Natural killer cell (primary cell): ENCODE measurements at regions of chr15 and their contacts with region 1.

Region 1: DNA sequence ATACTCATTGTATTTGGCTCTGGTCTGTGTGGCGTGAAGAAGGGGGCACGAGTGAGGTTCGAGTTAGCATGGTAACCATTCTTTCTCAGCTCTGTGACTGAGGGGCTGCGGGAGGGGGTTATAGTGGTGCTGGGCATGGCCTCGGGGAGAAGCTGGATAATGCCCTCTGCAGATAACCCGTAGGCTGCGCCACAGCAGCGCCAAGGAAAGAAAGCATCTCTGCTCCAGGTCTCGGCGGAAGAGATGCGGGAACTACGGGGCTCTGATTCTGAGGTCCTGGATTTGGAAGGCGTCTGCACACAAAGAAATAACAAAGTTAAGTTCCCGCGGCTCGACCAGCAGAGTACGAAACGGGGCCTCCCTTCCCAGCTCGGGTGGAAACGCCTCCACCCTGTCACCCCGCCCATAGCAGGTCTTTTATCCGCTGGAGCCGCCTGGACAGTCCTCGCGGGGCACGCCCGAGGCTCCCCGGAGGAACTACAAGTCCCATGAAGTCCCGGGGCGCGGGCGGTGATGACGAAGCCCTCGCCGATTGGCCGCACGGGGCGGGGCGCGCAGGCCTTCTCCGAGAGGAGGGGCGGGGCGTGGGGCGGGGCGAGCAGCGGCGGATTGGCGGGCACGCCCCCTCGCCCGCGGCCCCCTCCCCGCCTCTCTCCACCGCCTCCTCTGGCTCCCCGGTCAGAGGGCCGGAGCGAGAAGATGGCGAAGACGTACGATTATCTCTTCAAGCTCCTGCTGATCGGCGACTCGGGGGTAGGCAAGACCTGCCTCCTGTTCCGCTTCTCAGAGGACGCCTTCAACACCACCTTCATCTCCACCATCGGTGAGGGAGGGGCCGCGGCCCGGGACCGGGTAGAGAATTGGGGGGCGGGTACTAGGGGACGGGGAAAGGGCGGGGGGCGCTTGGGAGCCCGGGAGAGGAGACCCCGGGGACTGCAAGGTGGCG is at the start of gene RAB8B:
- DNase-seq: peak; percentile 95 to 96
- ATAC-seq: peak; percentile 72 to 91 (median 80)
- H3K4me3 ChIP-seq: peak within 1 kb of the TSS; percentile 89
- H3K4me3 Mint-ChIP-seq: peak within 1 kb of the TSS; percentile 97
- H3K27ac ChIP-seq: peak within 1 kb of the TSS; percentile 94
- H3K27ac Mint-ChIP-seq: peak within 1 kb of the TSS; percentile 93 to 99
- H3K4me1 ChIP-seq: peaks cover 25% of the 10 kb centered on the region
- H3K4me1 Mint-ChIP-seq: peaks cover 46 to 52% of the 10 kb centered on the region in 2 donors
- H3K27me3 ChIP-seq: no peaks in the 10 kb centered on the region
- H3K27me3 Mint-ChIP-seq: no peaks in the 10 kb centered on the region
- CTCF ChIP-seq: no peak
- total RNA-seq, gene RAB8B: 128 to 155 (median 137) TPM

Region 2: GRCh38 chr15:62752657-62753517 is 436.3 kb before region 1 on chr15:
- intact Hi-C with region 1: no loop called
- DNase-seq: no peak
- ATAC-seq: no peak
- H3K4me3 ChIP-seq: no peak overlapping the region
- H3K4me3 Mint-ChIP-seq: no peak overlapping the region
- H3K27ac ChIP-seq: no peak overlapping the region
- H3K27ac Mint-ChIP-seq: no peak overlapping the region
- H3K4me1 ChIP-seq: no peaks in the 10 kb centered on the region
- H3K4me1 Mint-ChIP-seq: no peaks in the 10 kb centered on the region
- H3K27me3 ChIP-seq: no peaks in the 10 kb centered on the region
- H3K27me3 Mint-ChIP-seq: peaks cover 3 to 6% of the 10 kb centered on the region in 2 donors
- CTCF ChIP-seq: no peak

Region 3: GRCh38 chr15:63157118-63157843 is 31.9 kb before region 1 on chr15 and contains the start of gene RPS27L:
- intact Hi-C with region 1: loop called (anchors 1 kb)
- DNase-seq: peak; percentile 80 to 90
- ATAC-seq: peak; percentile 93 to 97 (median 94)
- H3K4me3 ChIP-seq: peak within 1 kb of the TSS; percentile 69
- H3K4me3 Mint-ChIP-seq: peak within 1 kb of the TSS; percentile 99
- H3K27ac ChIP-seq: peak within 1 kb of the TSS; percentile 80
- H3K27ac Mint-ChIP-seq: peak within 1 kb of the TSS; percentile 95 to 97
- H3K4me1 ChIP-seq: peaks cover 6% of the 10 kb centered on the region
- H3K4me1 Mint-ChIP-seq: peaks cover 14 to 15% of the 10 kb centered on the region in 2 donors
- H3K27me3 ChIP-seq: no peaks in the 10 kb centered on the region
- H3K27me3 Mint-ChIP-seq: no peaks in the 10 kb centered on the region
- CTCF ChIP-seq: no peak
- total RNA-seq, gene RPS27L: 50.4 to 63.3 (median 52.2) TPM

Region 4: DNA sequence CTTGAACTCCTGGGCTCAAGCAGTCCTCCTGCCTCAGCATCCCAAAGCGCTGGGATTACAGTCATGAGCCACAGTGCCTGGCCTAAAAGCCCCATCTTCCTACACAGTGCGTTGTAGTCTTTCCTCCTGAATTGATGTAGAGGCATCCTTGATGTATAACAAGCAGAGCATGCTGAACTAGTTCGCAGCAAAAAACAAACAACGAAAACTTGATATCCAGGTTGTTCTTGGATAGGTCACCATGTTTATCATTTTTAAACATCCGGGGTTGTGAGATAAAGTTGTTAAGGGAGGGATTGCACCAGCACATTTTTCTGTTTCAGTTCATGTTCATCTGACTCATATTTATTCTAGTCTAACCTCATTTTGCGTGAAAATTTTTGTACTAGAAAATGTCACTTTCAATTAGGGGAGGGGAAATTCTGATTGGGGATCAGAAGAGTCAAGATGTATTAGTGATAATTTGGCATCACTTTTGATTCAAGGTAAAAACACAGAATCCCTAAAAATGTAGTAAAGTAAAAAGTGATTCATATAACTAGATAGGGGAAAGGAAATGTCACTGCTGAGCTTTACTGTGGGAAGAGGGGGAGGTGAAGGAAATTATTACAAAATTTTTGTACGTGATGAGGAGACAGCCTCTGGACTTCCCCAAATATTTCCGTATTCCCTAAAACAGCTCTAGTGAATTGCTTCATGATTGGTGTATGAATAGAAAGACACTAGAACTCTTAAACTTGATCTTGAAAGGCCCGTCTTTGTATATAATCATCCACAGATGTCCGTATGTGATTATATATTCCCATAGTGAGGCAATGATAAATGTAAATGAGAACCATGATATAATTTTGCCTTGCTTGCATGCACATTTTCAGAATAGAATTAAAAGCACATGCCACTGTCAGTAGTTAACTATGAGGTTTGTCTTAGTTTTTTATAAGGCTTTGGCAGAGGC is 23.1 kb after region 1 on chr15:
- intact Hi-C with region 1: loop called (anchors 2 kb)
- DNase-seq: peak in 1 of 2 donors; percentile 41
- ATAC-seq: peak; percentile 17 to 66 (median 41)
- H3K4me3 ChIP-seq: no peak overlapping the region
- H3K4me3 Mint-ChIP-seq: peak overlapping the region; percentile 64
- H3K27ac ChIP-seq: peak overlapping the region; percentile 65
- H3K27ac Mint-ChIP-seq: peak overlapping the region; percentile 86 to 93
- H3K4me1 ChIP-seq: peaks cover 39% of the 10 kb centered on the region
- H3K4me1 Mint-ChIP-seq: peaks cover 76 to 82% of the 10 kb centered on the region in 2 donors
- H3K27me3 ChIP-seq: no peaks in the 10 kb centered on the region
- H3K27me3 Mint-ChIP-seq: no peaks in the 10 kb centered on the region
- CTCF ChIP-seq: no peak

Region 5: DNA sequence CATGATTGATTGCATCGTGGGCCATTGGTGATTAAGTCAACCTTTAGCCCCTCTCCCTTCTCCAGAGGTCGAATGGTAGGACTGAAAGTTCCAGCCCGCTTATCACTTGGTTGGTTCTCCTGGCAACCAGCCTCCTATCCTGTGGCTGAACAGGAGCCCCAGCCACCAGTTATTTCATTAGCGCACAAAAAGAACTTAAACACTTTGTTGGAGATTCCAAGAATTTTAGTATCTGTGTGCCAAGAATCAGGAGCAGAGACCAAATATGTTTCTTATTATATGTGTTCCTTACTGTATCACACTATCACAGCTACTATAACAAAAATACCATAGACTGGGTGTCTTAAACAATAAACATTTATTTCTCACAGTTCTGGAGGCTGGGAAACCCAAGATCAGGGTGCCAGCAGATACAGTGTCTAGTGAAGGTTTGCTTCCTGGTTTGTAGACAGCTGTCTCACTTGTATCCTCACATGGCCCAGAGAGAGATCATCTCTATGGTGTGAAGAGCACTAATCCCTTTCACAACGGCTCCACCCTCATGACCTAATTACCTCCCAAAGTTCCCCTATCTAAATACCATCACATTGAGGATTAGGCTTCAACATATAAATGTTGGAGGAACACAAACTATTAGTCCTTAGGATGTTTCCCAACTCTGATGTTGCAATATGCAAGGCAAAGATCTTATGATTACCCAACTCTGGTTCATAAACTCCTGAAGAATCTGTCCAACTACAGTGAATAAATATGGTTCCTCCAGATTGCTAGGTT is 57.7 kb after region 1 on chr15:
- intact Hi-C with region 1: loop called (anchors 1 kb)
- DNase-seq: peak in 1 of 2 donors; percentile 38
- ATAC-seq: peak; percentile 81 to 90 (median 82)
- H3K4me3 ChIP-seq: no peak overlapping the region
- H3K4me3 Mint-ChIP-seq: peak overlapping the region; percentile 52
- H3K27ac ChIP-seq: peak overlapping the region; percentile 14
- H3K27ac Mint-ChIP-seq: peak overlapping the region; percentile 87 to 92
- H3K4me1 ChIP-seq: peaks cover 19% of the 10 kb centered on the region
- H3K4me1 Mint-ChIP-seq: peaks cover 83% of the 10 kb centered on the region in 2 donors
- H3K27me3 ChIP-seq: no peaks in the 10 kb centered on the region
- H3K27me3 Mint-ChIP-seq: no peaks in the 10 kb centered on the region
- CTCF ChIP-seq: no peak

Region 6: DNA sequence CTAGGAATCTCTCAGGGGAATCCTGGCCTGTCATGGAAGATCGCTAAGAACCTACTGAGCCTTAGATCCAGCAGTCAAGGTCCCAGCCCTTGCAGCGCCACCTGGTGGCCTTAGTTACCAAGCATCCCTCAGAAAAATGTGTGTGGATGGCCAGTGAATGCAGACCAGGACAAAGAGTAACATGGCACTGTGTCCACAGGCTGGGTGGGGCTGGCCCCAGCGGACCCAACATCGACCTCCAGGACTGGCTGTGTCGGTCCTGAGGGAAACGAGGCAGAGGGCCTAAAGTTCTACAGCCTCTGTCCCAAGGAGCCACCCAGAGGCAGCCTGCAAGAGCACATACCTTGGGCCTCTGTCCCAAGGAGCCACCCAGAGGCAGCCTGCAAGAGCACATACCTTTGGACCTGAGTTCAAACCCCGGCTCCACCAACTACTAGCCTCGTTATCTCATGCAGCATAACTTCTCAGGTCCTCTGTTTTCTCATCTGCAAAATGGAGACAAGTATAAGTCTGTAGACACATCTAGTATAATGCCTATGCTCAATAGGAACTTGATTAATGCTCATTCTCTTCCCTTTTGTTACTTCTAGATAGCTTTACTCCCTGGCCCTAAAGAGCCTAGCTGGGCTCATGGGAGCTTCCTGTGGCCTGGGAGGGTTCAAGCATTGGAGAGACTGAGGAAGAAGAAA is 702.0 kb after region 1 on chr15:
- intact Hi-C with region 1: loop called (anchors 10 kb)
- DNase-seq: peak; percentile 69 to 88
- ATAC-seq: peak; percentile 19 to 48 (median 27)
- H3K4me3 ChIP-seq: no peak overlapping the region
- H3K4me3 Mint-ChIP-seq: no peak overlapping the region
- H3K27ac ChIP-seq: no peak overlapping the region
- H3K27ac Mint-ChIP-seq: peak overlapping the region in 1 of 2 donors; percentile 77
- H3K4me1 ChIP-seq: peaks cover 58% of the 10 kb centered on the region
- H3K4me1 Mint-ChIP-seq: peaks cover 49 to 56% of the 10 kb centered on the region in 2 donors
- H3K27me3 ChIP-seq: no peaks in the 10 kb centered on the region
- H3K27me3 Mint-ChIP-seq: no peaks in the 10 kb centered on the region
- CTCF ChIP-seq: peak; percentile 88